ENCODE measurements at regions of chr1 and their contacts with region 1.

Region 1: DNA sequence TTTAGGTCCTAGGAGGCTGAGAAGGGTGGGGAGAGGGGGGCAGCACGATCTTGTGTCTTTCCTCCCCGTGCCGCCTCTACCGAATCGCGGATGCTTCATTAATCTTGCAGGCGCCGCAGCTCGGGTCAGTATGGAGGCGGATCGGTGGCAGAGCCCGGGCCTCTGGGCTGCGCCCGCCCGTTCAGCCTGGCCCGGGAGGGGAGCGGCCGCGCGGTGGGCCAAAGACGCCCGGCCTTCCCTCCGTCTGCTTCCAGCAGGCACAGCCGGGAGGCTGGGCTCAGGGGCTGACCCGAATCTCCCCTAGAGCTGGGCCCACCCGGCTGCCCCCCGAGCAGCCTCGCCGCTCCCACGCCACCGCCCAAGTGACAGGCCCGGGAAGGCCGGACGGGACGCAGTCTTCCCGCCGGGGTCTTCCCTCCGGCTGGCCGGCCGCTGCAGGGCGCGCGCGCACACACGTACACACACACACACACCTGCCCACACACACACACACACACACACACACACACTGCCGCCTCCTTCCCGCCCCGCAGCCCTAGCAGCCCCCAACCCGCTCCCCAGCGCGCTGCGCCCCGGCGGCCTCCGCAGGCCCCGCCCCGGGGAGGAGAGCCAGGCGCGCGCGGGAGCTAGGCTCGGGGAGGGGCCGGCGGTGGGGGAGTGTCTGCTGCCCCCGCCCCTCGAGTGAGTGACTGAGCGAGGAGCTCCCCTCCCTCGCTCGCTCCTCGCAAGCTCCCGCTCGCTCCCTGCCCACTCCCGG is at the start of gene C1orf21:
- DNase-seq: peak; percentile 94
- H3K4me3 Mint-ChIP-seq: peak within 1 kb of the TSS; percentile 84
- H3K27ac Mint-ChIP-seq: peak within 1 kb of the TSS; percentile 83
- H3K4me1 Mint-ChIP-seq: peaks cover 16% of the 10 kb centered on the region
- H3K27me3 Mint-ChIP-seq: peaks cover 81% of the 10 kb centered on the region
- total RNA-seq, gene C1orf21: 1.8 and 2.5 TPM in 2 replicates

Region 2: DNA sequence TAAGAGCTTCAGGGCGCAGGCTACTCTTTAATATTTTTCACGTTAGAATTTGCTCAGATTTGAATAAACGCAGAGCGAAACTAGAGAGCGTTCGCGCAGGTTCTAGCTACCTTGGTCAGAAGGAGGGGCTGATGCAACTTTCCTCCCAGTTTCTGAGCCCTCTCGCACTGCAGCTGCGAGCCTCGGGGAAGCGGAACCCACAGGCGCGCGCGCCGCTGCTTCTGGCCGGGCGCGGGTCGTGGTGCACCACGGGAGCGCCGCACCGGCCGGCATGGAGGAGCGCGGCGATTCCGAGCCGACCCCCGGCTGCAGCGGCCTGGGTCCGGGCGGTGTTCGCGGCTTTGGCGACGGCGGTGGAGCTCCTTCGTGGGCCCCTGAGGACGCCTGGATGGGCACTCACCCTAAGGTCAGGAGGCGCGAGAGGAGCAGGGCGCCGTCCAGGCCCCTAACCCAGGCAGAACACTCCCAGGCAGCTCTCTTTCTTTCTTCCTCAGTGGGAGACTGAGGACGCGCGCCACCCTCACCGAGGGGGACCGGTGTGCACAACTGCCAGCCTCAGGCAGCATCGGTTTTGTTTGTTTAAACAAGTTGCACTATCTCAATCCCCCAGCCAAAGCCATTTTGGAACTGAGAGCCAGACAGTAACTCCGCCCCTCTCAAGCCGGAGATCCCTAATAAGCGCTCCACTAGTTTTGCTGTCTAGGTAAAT is 334.9 kb before region 1 on chr1 and contains the start of gene TSEN15:
- intact Hi-C with region 1: loop called (anchors 2 kb)
- DNase-seq: peak; percentile 93
- H3K4me3 Mint-ChIP-seq: peak within 1 kb of the TSS; percentile 96
- H3K27ac Mint-ChIP-seq: peak within 1 kb of the TSS; percentile 98
- H3K4me1 Mint-ChIP-seq: peaks cover 30% of the 10 kb centered on the region
- H3K27me3 Mint-ChIP-seq: peaks cover 25% of the 10 kb centered on the region
- total RNA-seq, gene TSEN15: 44.9 and 48.3 TPM in 2 replicates

Region 3: GRCh38 chr1:184489908-184490307 is 103.4 kb after region 1 on chr1:
- intact Hi-C with region 1: loop called (anchors 2 kb)
- DNase-seq: no peak
- H3K4me3 Mint-ChIP-seq: no peak overlapping the region
- H3K27ac Mint-ChIP-seq: no peak overlapping the region
- H3K4me1 Mint-ChIP-seq: peaks cover 14% of the 10 kb centered on the region
- H3K27me3 Mint-ChIP-seq: peaks cover 5% of the 10 kb centered on the region